ENCODE measurements at regions of chr10 and their contacts with region 1.

Region 1: GRCh38 chr10:63217120-63217605 is 84.0 kb downstream of the NRBF2 start:
- DNase-seq: peak; percentile 46
- ATAC-seq: peak; percentile 81
- H3K4me3 Mint-ChIP-seq: no peak overlapping the region
- H3K27ac Mint-ChIP-seq: no peak overlapping the region
- H3K4me1 Mint-ChIP-seq: peaks cover 45% of the 10 kb centered on the region
- H3K27me3 Mint-ChIP-seq: no peaks in the 10 kb centered on the region

Region 2: GRCh38 chr10:63227207-63227915 is 10.2 kb after region 1 on chr10:
- CTCF ChIA-PET with region 1: interaction called, 32 read pairs
- POLR2A ChIA-PET with region 1: no interaction called
- DNase-seq: no peak
- ATAC-seq: peak; percentile 49
- H3K4me3 Mint-ChIP-seq: peak overlapping the region; percentile 42
- H3K27ac Mint-ChIP-seq: peak overlapping the region; percentile 82
- H3K4me1 Mint-ChIP-seq: peaks cover 47% of the 10 kb centered on the region
- H3K27me3 Mint-ChIP-seq: no peaks in the 10 kb centered on the region

Region 3: DNA sequence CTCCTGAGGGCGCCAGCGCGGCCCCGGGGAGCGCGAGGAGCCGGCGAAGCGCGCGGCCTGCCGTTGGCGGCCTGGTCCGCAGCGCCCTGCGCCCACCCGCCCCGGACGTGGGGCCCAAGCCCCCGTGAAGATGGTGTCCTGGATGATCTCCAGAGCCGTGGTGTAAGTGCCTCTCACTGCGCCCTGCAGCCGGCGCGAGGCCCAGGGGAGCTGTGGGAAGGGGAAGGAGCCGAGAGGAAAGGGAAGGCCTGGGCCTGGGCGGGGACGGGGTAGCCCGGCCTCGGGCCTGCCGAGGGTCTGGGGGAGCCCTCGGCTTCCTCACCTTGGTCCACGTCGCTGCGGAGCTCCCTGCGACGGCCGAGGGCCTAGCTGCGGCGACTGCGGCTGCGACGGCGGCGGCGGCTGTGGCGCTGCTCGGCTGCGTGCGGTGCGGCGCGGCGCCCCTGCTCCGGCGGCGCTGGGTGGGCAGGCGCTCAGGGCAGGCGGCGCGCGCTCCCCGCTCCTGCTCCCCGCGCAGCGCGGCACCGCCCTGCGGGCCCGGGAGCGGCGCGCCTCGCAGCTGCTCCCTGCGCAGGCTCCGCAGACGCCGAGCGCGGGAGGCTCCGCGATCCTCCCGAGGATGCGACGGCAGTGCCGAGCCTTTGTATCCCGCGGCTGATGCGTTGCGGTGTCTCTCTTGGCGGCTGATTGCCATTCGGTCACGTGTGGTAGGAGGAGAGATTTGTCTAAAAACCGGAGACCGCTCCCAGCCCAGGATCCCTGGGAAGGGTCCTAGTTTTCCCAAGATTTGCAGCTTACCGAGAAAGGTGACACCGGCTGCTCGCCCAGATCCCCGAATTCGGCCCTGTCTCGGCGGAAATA is 304.5 kb after region 1 on chr10:
- CTCF ChIA-PET with region 1: interaction called, 13 read pairs
- POLR2A ChIA-PET with region 1: no interaction called
- DNase-seq: peak; percentile 56
- ATAC-seq: peak; percentile 77
- H3K4me3 Mint-ChIP-seq: peak overlapping the region; percentile 87
- H3K27ac Mint-ChIP-seq: peak overlapping the region; percentile 91
- H3K4me1 Mint-ChIP-seq: peaks cover 61% of the 10 kb centered on the region
- H3K27me3 Mint-ChIP-seq: no peaks in the 10 kb centered on the region

Measured in activated CD8-positive, alpha-beta T cell treated with anti-CD3 and anti-CD28 coated beads, Interleukin-2, amount 10 ng/mL, durations not matched to agents 7 days and 5 days (primary cell).